Naive thymus-derived CD4-positive, alpha-beta T cell (primary cell): ENCODE measurements at regions of chr15 and their contacts with region 1.

Region 1: DNA sequence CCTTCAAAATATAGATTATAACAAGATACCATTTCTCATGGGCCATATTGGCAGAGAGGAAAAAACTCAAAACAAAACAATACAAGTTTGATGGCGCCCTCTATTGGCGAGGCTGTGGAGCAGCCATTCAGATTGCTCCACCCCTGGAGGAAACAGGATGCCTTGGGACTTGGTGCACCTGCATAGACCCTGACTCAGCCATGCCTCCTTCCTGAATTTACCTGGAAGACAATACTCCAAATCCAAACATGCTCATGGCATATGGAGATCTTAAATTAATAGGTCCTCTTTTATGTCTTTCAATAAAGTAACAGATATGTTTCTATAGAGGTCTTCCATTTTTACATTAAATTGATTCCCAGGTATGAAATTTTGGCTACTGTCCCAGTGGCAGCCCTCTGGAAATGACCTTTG is 90.0 kb downstream of the APBA2 start:
- DNase-seq: peak; percentile 45 to 82 (median 75)
- ATAC-seq: peak; percentile 89
- H3K4me3 ChIP-seq: no peak overlapping the region
- H3K4me3 Mint-ChIP-seq: peak overlapping the region in 1 of 10 donors; percentile 9
- H3K27ac ChIP-seq: no peak overlapping the region
- H3K27ac Mint-ChIP-seq: peak overlapping the region in 5 of 9 donors; percentile 5 to 82 (median 40)
- H3K4me1 ChIP-seq: peaks cover 0 to 8% of the 10 kb centered on the region in 2 donors
- H3K4me1 Mint-ChIP-seq: peaks cover 4 to 74% (median 70%) of the 10 kb centered on the region in 7 donors
- H3K27me3 ChIP-seq: no peaks in the 10 kb centered on the region
- H3K27me3 Mint-ChIP-seq: peaks cover 0 to 15% (median 0%) of the 10 kb centered on the region in 5 donors

Region 2: GRCh38 chr15:28786521-28786920 is 189.3 kb before region 1 on chr15:
- CTCF ChIA-PET with region 1: no interaction called
- POLR2A ChIA-PET with region 1: no interaction called
- intact Hi-C with region 1: loop called (anchors 1 to 10 kb)
- DNase-seq: no peak
- ATAC-seq: no peak
- H3K4me3 ChIP-seq: no peak overlapping the region
- H3K4me3 Mint-ChIP-seq: no peak overlapping the region
- H3K27ac ChIP-seq: no peak overlapping the region
- H3K27ac Mint-ChIP-seq: no peak overlapping the region
- H3K4me1 ChIP-seq: no peaks in the 10 kb centered on the region
- H3K4me1 Mint-ChIP-seq: peaks cover 0 to 9% (median 3%) of the 10 kb centered on the region in 7 donors
- H3K27me3 ChIP-seq: no peaks in the 10 kb centered on the region
- H3K27me3 Mint-ChIP-seq: peaks cover 10 to 40% (median 17%) of the 10 kb centered on the region in 5 donors

Region 3: DNA sequence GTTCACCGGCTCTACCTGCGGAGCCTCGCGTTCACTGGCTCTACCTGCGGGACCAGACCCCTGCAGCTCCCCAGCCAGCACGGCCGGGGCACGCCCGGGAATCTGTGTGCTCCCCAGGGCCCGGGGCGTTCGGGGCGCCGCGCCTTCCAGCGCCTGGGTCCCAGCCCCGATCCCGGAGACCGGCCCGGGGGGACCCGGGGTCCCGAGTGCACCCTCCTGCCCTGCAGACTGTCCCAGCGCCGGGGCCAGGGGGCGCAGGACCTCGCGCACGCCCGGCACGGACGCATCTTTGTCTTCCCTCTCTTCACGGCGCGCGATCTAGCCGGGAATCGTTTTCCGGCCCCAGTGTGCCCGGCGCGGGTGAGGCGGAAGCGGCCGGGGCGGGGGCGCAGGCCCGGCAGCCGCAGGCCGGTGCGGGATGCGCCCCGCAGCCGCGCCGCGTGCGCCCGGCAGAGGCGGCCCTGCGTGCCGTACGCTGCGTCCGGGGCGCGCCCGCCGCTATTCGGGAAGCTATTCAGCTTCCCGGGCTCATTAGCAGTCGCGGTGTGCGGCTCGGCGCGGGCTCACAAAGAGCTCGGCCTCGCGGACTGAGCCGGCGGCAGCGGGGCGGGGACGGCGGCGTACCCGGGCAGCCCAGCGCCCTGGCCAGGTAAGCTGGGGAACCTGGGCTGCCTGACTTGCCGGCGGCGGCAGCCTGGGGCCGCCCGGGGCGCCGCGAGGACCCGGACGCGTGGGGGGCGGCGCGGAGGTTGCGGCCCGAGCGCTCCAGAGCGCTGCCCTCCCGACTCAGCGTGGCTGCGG is 89.9 kb before region 1 on chr15 and contains the start of gene APBA2:
- CTCF ChIA-PET with region 1: interaction called, 7 read pairs
- POLR2A ChIA-PET with region 1: interaction called, 21 read pairs
- intact Hi-C with region 1: loop called (anchors 1 to 2 kb)
- DNase-seq: peak; percentile 36 to 73 (median 67)
- ATAC-seq: peak; percentile 70
- H3K4me3 ChIP-seq: peak within 1 kb of the TSS; percentile 65
- H3K4me3 Mint-ChIP-seq: peak within 1 kb of the TSS; percentile 71 to 94 (median 92)
- H3K27ac ChIP-seq: peak within 1 kb of the TSS; percentile 79
- H3K27ac Mint-ChIP-seq: peak within 1 kb of the TSS in 8 of 9 donors; percentile 96 to 100 (median 98)
- H3K4me1 ChIP-seq: peaks cover 18 to 44% of the 10 kb centered on the region in 2 donors
- H3K4me1 Mint-ChIP-seq: peaks cover 29 to 45% (median 39%) of the 10 kb centered on the region in 7 donors
- H3K27me3 ChIP-seq: no peaks in the 10 kb centered on the region
- H3K27me3 Mint-ChIP-seq: peaks cover 0 to 42% (median 0%) of the 10 kb centered on the region in 5 donors
- total RNA-seq, gene APBA2: 7.7 to 139 (median 110) TPM

Region 4: DNA sequence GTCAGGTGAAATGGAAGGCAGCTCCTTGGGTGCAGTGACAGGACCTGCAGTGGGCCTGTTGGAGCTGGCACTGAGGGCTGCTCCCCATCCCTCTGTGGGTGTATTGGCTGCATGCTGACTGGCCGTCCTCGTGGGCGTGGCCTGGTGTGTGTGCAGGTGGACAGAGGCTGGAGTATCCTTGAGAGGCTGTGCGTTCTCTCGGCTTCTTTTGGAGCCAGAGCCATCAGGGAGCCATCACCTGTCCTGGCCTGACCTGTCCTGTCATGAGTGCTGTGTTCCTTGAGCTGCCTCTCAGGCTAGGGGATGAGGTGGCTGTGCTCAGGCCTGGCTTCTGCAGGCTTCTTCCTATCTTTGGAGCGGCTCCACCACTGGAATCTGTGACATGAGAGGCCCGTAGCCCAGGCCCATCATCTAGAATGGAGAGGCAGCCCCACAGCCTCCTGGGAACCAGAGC is 28.5 kb before region 1 on chr15:
- CTCF ChIA-PET with region 1: interaction called, 4 read pairs
- POLR2A ChIA-PET with region 1: interaction called, 3 read pairs
- intact Hi-C with region 1: loop called in 1 of 2 experiments (anchors 2 kb)
- DNase-seq: no peak
- ATAC-seq: no peak
- H3K4me3 ChIP-seq: peak overlapping the region; percentile 50
- H3K4me3 Mint-ChIP-seq: peak overlapping the region in 9 of 10 donors; percentile 47 to 89 (median 81)
- H3K27ac ChIP-seq: peak overlapping the region; percentile 62
- H3K27ac Mint-ChIP-seq: peak overlapping the region in 8 of 9 donors; percentile 87 to 99 (median 95)
- H3K4me1 ChIP-seq: peaks cover 25 to 65% of the 10 kb centered on the region in 2 donors
- H3K4me1 Mint-ChIP-seq: peaks cover 18 to 93% (median 85%) of the 10 kb centered on the region in 7 donors
- H3K27me3 ChIP-seq: no peaks in the 10 kb centered on the region
- H3K27me3 Mint-ChIP-seq: peaks cover 0 to 6% (median 0%) of the 10 kb centered on the region in 5 donors

Region 5: GRCh38 chr15:29480278-29480677 is 504.5 kb after region 1 on chr15:
- CTCF ChIA-PET with region 1: no interaction called
- POLR2A ChIA-PET with region 1: no interaction called
- intact Hi-C with region 1: no loop called
- DNase-seq: no peak
- ATAC-seq: no peak
- H3K4me3 ChIP-seq: no peak overlapping the region
- H3K4me3 Mint-ChIP-seq: no peak overlapping the region
- H3K27ac ChIP-seq: no peak overlapping the region
- H3K27ac Mint-ChIP-seq: no peak overlapping the region
- H3K4me1 ChIP-seq: no peaks in the 10 kb centered on the region
- H3K4me1 Mint-ChIP-seq: no peaks in the 10 kb centered on the region
- H3K27me3 ChIP-seq: no peaks in the 10 kb centered on the region
- H3K27me3 Mint-ChIP-seq: peaks cover 2 to 30% (median 8%) of the 10 kb centered on the region in 5 donors